ENCODE measurements at regions of chr22 and their contacts with region 1.

Region 1: GRCh38 chr22:41256254-41256897 is 15.6 kb upstream of the CHADL start:
- DNase-seq: peak; percentile 82
- ATAC-seq: peak; percentile 91
- H3K4me3 ChIP-seq: no peak overlapping the region
- H3K27ac ChIP-seq: peak overlapping the region; percentile 90
- H3K4me1 ChIP-seq: peaks cover 18% of the 10 kb centered on the region
- H3K27me3 ChIP-seq: no peaks in the 10 kb centered on the region
- CTCF ChIP-seq: peak; percentile 45

Region 2: DNA sequence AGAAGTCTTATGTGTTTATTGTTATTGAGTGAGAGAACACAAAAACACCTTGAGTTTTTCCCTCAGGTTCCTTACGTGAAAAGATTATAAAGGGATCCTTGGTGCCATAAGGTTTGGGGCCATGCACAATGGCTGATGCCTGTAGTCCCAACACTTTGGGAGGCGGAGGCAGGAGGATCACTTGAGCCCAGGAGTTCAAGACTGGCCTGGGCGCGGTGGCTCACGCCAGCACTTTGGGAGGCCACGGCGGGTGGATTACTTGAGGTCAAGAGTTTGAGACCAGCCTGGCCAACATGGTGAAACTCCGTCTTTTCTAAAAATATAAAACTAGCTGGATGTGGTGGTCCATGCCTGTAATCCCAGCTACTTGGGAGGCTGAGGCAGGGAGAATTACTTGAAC is 828.5 kb after region 1 on chr22:
- CTCF ChIA-PET with region 1: no interaction called
- POLR2A ChIA-PET with region 1: interaction called, 10 read pairs
- intact Hi-C with region 1: no loop called
- DNase-seq: no peak
- ATAC-seq: no peak
- H3K4me3 ChIP-seq: no peak overlapping the region
- H3K27ac ChIP-seq: no peak overlapping the region
- H3K4me1 ChIP-seq: peaks cover 14% of the 10 kb centered on the region
- H3K27me3 ChIP-seq: no peaks in the 10 kb centered on the region
- CTCF ChIP-seq: no peak

Measured in PC-3 (cell line).